Natural killer cell (primary cell): ENCODE measurements at regions of chr4 and their contacts with region 1.

Region 1: GRCh38 chr4:155787113-155787710 is 28.4 kb downstream of the GUCY1B1 start:
- DNase-seq: peak in 1 of 2 donors; percentile 48
- ATAC-seq: peak; percentile 75 to 97 (median 95)
- H3K4me3 ChIP-seq: no peak overlapping the region
- H3K4me3 Mint-ChIP-seq: no peak overlapping the region
- H3K27ac ChIP-seq: no peak overlapping the region
- H3K27ac Mint-ChIP-seq: no peak overlapping the region
- H3K4me1 ChIP-seq: no peaks in the 10 kb centered on the region
- H3K4me1 Mint-ChIP-seq: peaks cover 5% of the 10 kb centered on the region in 2 donors
- H3K27me3 ChIP-seq: no peaks in the 10 kb centered on the region
- H3K27me3 Mint-ChIP-seq: no peaks in the 10 kb centered on the region
- CTCF ChIP-seq: peak; percentile 81

Region 2: GRCh38 chr4:154982187-154983047 is 804.8 kb before region 1 on chr4:
- intact Hi-C with region 1: loop called (anchors 5 kb)
- DNase-seq: peak in 1 of 2 donors; percentile 41
- ATAC-seq: no peak
- H3K4me3 ChIP-seq: no peak overlapping the region
- H3K4me3 Mint-ChIP-seq: no peak overlapping the region
- H3K27ac ChIP-seq: no peak overlapping the region
- H3K27ac Mint-ChIP-seq: no peak overlapping the region
- H3K4me1 ChIP-seq: no peaks in the 10 kb centered on the region
- H3K4me1 Mint-ChIP-seq: no peaks in the 10 kb centered on the region
- H3K27me3 ChIP-seq: no peaks in the 10 kb centered on the region
- H3K27me3 Mint-ChIP-seq: no peaks in the 10 kb centered on the region
- CTCF ChIP-seq: no peak

Region 3: GRCh38 chr4:155353923-155354540 is 433.2 kb before region 1 on chr4:
- intact Hi-C with region 1: no loop called
- DNase-seq: peak in 1 of 2 donors; percentile 42
- ATAC-seq: peak; percentile 55 to 82 (median 60)
- H3K4me3 ChIP-seq: no peak overlapping the region
- H3K4me3 Mint-ChIP-seq: no peak overlapping the region
- H3K27ac ChIP-seq: no peak overlapping the region
- H3K27ac Mint-ChIP-seq: no peak overlapping the region
- H3K4me1 ChIP-seq: no peaks in the 10 kb centered on the region
- H3K4me1 Mint-ChIP-seq: peaks cover 0 to 5% of the 10 kb centered on the region in 2 donors
- H3K27me3 ChIP-seq: no peaks in the 10 kb centered on the region
- H3K27me3 Mint-ChIP-seq: no peaks in the 10 kb centered on the region
- CTCF ChIP-seq: peak; percentile 35

Region 4: GRCh38 chr4:155442267-155443105 is 344.7 kb before region 1 on chr4:
- intact Hi-C with region 1: loop called (anchors 1 kb)
- DNase-seq: peak; percentile 56 to 66
- ATAC-seq: peak; percentile 73 to 87 (median 79)
- H3K4me3 ChIP-seq: no peak overlapping the region
- H3K4me3 Mint-ChIP-seq: no peak overlapping the region
- H3K27ac ChIP-seq: no peak overlapping the region
- H3K27ac Mint-ChIP-seq: no peak overlapping the region
- H3K4me1 ChIP-seq: no peaks in the 10 kb centered on the region
- H3K4me1 Mint-ChIP-seq: peaks cover 6% of the 10 kb centered on the region in 2 donors
- H3K27me3 ChIP-seq: no peaks in the 10 kb centered on the region
- H3K27me3 Mint-ChIP-seq: peaks cover 16 to 28% of the 10 kb centered on the region in 2 donors
- CTCF ChIP-seq: peak; percentile 84

Region 5: DNA sequence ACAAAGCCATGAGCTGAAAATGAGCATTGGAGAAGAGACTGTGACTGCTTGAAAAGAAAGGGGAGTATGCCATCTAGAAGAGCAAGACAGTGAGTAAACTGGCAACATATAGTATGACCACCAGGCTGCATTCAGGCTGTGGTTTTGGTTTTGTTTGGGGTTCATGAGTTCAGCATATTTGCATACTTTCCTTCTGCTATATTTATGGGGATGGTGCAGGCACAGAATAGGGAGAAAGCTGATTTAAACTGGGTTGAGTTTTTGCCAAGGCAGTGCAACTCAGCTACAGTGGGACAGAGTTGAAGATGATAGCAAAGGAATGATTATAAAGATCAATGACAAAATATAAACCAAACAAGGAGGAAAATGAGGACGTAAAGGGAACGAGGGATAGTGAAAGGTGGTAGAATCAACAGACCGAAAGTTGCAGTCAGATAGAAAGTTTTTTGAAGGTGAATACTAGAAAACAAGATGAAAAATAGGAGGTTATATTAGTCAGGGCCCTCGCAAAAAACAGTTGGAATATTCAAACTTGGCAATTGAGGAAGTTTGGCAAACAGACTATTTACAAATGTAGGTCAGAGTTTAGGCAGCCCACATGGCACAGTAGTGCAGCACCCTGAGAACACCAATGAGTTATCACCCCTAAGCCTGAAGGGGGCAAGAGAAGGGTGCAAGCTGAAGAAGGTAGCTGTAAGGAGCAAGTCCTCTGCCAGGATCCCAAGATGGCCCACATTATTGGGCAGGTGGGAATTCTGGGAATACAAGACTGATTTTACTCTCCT is 295.7 kb before region 1 on chr4:
- intact Hi-C with region 1: no loop called
- DNase-seq: no peak
- ATAC-seq: no peak
- H3K4me3 ChIP-seq: no peak overlapping the region
- H3K4me3 Mint-ChIP-seq: no peak overlapping the region
- H3K27ac ChIP-seq: no peak overlapping the region
- H3K27ac Mint-ChIP-seq: no peak overlapping the region
- H3K4me1 ChIP-seq: no peaks in the 10 kb centered on the region
- H3K4me1 Mint-ChIP-seq: no peaks in the 10 kb centered on the region
- H3K27me3 ChIP-seq: no peaks in the 10 kb centered on the region
- H3K27me3 Mint-ChIP-seq: peaks cover 0 to 7% of the 10 kb centered on the region in 2 donors
- CTCF ChIP-seq: no peak

Region 6: DNA sequence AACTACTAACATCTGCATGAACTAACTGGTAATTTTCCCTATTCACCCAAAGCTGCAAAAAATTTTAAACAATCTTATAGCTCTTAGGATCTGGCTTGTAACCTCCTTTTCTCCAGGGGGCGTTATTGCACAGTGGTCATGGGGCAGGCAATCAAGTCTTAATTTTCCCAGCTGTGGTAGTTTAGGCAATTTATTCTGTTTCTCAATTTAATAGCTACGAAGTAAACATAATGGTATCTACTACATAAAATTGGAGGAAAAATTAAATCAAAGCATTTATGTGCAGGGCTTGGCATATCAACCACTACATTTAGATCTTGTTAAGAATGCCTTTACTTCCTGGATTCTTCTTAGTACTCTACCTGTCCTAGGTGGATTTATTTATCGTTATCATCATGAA is 257.9 kb before region 1 on chr4:
- intact Hi-C with region 1: loop called (anchors 1 kb)
- DNase-seq: peak in 1 of 2 donors; percentile 3
- ATAC-seq: no peak
- H3K4me3 ChIP-seq: no peak overlapping the region
- H3K4me3 Mint-ChIP-seq: no peak overlapping the region
- H3K27ac ChIP-seq: no peak overlapping the region
- H3K27ac Mint-ChIP-seq: no peak overlapping the region
- H3K4me1 ChIP-seq: no peaks in the 10 kb centered on the region
- H3K4me1 Mint-ChIP-seq: no peaks in the 10 kb centered on the region
- H3K27me3 ChIP-seq: no peaks in the 10 kb centered on the region
- H3K27me3 Mint-ChIP-seq: peaks cover 4 to 7% of the 10 kb centered on the region in 2 donors
- CTCF ChIP-seq: no peak

Region 7: DNA sequence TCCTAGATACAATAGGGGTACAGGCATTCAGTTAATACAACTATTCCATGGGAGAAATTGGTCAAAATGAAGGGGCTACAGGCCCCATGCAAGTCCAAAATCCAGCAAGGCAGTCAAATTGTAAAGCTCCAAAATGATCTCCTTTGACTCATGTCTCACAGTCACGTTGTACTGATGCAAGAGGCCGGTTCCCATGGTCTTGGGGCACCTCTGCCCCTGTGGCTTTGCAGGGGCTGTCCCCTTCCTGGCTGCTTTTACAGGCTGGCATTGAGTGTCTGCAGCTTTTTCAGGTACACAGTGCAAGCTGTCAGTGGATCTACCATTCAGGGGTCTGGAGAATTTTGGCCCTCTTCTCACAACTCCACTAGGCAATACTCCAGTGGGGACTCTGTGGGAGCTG is 91.4 kb after region 1 on chr4:
- intact Hi-C with region 1: no loop called
- DNase-seq: no peak
- ATAC-seq: no peak
- H3K4me3 ChIP-seq: no peak overlapping the region
- H3K4me3 Mint-ChIP-seq: no peak overlapping the region
- H3K27ac ChIP-seq: no peak overlapping the region
- H3K27ac Mint-ChIP-seq: no peak overlapping the region
- H3K4me1 ChIP-seq: no peaks in the 10 kb centered on the region
- H3K4me1 Mint-ChIP-seq: no peaks in the 10 kb centered on the region
- H3K27me3 ChIP-seq: no peaks in the 10 kb centered on the region
- H3K27me3 Mint-ChIP-seq: no peaks in the 10 kb centered on the region
- CTCF ChIP-seq: no peak

Region 8: GRCh38 chr4:156362581-156362980 is 575.4 kb after region 1 on chr4:
- intact Hi-C with region 1: no loop called
- DNase-seq: no peak
- ATAC-seq: no peak
- H3K4me3 ChIP-seq: no peak overlapping the region
- H3K4me3 Mint-ChIP-seq: no peak overlapping the region
- H3K27ac ChIP-seq: no peak overlapping the region
- H3K27ac Mint-ChIP-seq: no peak overlapping the region
- H3K4me1 ChIP-seq: no peaks in the 10 kb centered on the region
- H3K4me1 Mint-ChIP-seq: no peaks in the 10 kb centered on the region
- H3K27me3 ChIP-seq: no peaks in the 10 kb centered on the region
- H3K27me3 Mint-ChIP-seq: no peaks in the 10 kb centered on the region
- CTCF ChIP-seq: no peak